Right ventricle myocardium superior (tissue), 1 donor: ENCODE measurements at regions of chr5 and their contacts with region 1.

Region 1: GRCh38 chr5:176537608-176538504 is 654 bp upstream of the RNF44 start:
- DNase-seq: peak; percentile 99
- ATAC-seq: peak; percentile 87

Region 2: DNA sequence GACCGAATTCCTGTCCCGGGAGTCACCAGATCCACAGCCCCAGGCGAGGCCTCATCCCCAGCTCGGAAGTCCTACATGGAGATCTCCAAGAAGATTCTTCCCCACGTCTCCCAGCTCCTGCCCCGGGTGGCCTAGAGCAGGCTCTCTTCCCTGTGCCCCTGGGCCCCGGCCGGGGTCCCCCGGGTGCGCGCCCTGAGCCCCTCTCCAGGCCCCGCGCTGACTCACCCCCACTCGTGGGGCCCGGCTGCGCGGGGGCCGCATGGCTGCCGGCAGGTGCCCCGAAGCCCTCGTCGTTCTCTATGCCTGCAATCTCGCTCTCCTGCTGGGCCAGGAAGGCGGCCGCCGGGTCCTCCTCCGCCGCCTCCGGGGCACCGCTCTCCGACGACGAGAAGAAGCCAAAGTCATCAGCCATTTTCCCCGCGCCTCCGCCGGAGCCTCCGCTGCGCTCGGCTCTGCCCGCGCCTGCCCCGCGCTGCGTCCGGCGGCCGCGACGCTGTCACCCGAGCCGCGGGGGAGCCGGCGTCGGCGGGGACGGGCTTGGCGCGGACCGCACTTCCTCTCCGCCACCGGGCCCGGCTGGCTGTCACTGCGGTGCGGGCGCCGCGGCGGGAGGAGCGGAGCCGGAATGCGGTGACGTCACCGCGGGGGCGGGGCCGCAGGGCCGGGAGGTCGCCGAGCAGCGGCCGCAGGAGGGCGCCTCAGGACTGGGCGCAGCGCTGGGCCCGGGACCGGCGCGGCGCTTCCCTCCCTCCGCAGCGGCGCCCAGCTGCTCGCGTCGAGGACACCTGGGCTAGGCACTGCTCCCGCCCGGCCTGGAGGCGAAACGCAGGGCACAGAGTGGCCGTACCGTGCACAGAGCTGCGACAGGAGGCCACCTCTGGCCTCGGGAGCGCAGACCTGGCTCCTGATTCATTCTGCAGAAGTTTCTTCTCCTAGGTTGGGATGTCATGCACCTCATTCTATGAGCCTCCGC is 121.6 kb before region 1 on chr5 and contains the start of gene CLTB:
- intact Hi-C with region 1: loop called (anchors 10 kb)
- DNase-seq: peak; percentile 96
- ATAC-seq: peak; percentile 97
- total RNA-seq, gene CLTB: 209 TPM